Naive thymus-derived CD4-positive, alpha-beta T cell (primary cell): ENCODE measurements at regions of chr3 and their contacts with region 1.

Region 1: GRCh38 chr3:183468424-183468823 is 40.0 kb upstream of the MCF2L2 start:
- DNase-seq: no peak
- ATAC-seq: no peak
- H3K4me3 ChIP-seq: no peak overlapping the region
- H3K4me3 Mint-ChIP-seq: no peak overlapping the region
- H3K27ac ChIP-seq: no peak overlapping the region
- H3K27ac Mint-ChIP-seq: peak overlapping the region in 1 of 9 donors; percentile 27
- H3K4me1 ChIP-seq: peaks cover 0 to 5% of the 10 kb centered on the region in 2 donors
- H3K4me1 Mint-ChIP-seq: peaks cover 2 to 18% (median 5%) of the 10 kb centered on the region in 7 donors
- H3K27me3 ChIP-seq: no peaks in the 10 kb centered on the region
- H3K27me3 Mint-ChIP-seq: peaks cover 0 to 4% (median 0%) of the 10 kb centered on the region in 5 donors

Region 2: GRCh38 chr3:183122257-183122932 is 346.0 kb before region 1 on chr3:
- CTCF ChIA-PET with region 1: no interaction called
- POLR2A ChIA-PET with region 1: no interaction called
- intact Hi-C with region 1: loop called in 1 of 2 experiments (anchors 5 kb)
- DNase-seq: peak in 7 of 9 donors; percentile 15 to 60 (median 49)
- ATAC-seq: peak; percentile 75
- H3K4me3 ChIP-seq: no peak overlapping the region
- H3K4me3 Mint-ChIP-seq: no peak overlapping the region
- H3K27ac ChIP-seq: no peak overlapping the region
- H3K27ac Mint-ChIP-seq: no peak overlapping the region
- H3K4me1 ChIP-seq: no peaks in the 10 kb centered on the region
- H3K4me1 Mint-ChIP-seq: peaks cover 0 to 6% (median 0%) of the 10 kb centered on the region in 7 donors
- H3K27me3 ChIP-seq: no peaks in the 10 kb centered on the region
- H3K27me3 Mint-ChIP-seq: peaks cover 2 to 5% (median 4%) of the 10 kb centered on the region in 5 donors

Region 3: DNA sequence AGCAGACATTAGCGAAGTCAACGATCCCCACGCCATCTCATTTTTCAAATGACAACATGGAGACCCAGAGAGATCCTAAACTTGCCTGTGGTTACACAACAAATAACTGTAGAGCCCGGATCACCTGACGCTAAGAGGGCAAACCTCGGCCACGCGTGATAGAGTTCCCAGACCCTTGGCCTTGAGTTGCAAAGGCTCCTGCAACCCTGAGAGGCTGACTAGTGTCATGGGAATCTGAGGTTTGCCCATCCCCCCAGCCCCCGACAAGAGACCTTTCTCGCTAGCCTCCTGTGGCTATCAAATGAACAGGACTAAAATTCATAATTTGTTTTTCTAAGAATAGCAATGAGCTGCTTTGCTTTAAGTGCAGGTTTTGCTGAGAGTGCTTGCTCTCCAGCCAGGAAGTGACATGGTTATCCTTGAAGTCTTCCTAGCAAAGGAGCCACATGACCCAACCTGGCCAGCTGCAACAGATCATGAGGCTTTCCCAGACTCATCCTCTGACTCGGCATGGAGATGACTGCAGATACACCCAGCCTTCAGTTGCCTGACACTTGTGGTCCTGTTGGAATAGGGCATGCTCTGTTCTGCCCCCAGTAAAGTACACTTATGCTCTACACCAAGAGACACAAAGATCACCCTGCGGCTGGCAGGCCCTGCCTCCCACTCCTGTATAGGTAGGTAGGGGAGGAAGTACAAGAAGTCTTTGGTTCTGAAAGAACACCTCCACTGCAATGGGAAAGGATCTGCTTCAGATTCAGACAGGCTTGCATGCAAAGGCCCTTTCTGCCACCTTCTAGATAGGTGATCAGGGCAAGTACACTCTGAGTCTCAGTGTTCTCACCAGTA is 76.0 kb before region 1 on chr3:
- CTCF ChIA-PET with region 1: no interaction called
- POLR2A ChIA-PET with region 1: no interaction called
- intact Hi-C with region 1: no loop called
- DNase-seq: no peak
- ATAC-seq: no peak
- H3K4me3 ChIP-seq: no peak overlapping the region
- H3K4me3 Mint-ChIP-seq: no peak overlapping the region
- H3K27ac ChIP-seq: no peak overlapping the region
- H3K27ac Mint-ChIP-seq: no peak overlapping the region
- H3K4me1 ChIP-seq: no peaks in the 10 kb centered on the region
- H3K4me1 Mint-ChIP-seq: peaks cover 0 to 2% (median 0%) of the 10 kb centered on the region in 7 donors
- H3K27me3 ChIP-seq: no peaks in the 10 kb centered on the region
- H3K27me3 Mint-ChIP-seq: peaks cover 0 to 8% (median 0%) of the 10 kb centered on the region in 5 donors

Region 4: GRCh38 chr3:183427876-183428446 is 40.5 kb before region 1 on chr3:
- CTCF ChIA-PET with region 1: no interaction called
- POLR2A ChIA-PET with region 1: no interaction called
- intact Hi-C with region 1: loop called (anchors 1 to 2 kb)
- DNase-seq: peak in 5 of 9 donors; percentile 3 to 55 (median 4)
- ATAC-seq: peak; percentile 34
- H3K4me3 ChIP-seq: peak overlapping the region; percentile 77
- H3K4me3 Mint-ChIP-seq: peak overlapping the region; percentile 66 to 90 (median 80)
- H3K27ac ChIP-seq: no peak overlapping the region
- H3K27ac Mint-ChIP-seq: peak overlapping the region in 2 of 9 donors; percentile 20 to 61
- H3K4me1 ChIP-seq: peaks cover 0 to 8% of the 10 kb centered on the region in 2 donors
- H3K4me1 Mint-ChIP-seq: peaks cover 0 to 28% (median 5%) of the 10 kb centered on the region in 7 donors
- H3K27me3 ChIP-seq: no peaks in the 10 kb centered on the region
- H3K27me3 Mint-ChIP-seq: peaks cover 0 to 29% (median 2%) of the 10 kb centered on the region in 5 donors

Region 5: DNA sequence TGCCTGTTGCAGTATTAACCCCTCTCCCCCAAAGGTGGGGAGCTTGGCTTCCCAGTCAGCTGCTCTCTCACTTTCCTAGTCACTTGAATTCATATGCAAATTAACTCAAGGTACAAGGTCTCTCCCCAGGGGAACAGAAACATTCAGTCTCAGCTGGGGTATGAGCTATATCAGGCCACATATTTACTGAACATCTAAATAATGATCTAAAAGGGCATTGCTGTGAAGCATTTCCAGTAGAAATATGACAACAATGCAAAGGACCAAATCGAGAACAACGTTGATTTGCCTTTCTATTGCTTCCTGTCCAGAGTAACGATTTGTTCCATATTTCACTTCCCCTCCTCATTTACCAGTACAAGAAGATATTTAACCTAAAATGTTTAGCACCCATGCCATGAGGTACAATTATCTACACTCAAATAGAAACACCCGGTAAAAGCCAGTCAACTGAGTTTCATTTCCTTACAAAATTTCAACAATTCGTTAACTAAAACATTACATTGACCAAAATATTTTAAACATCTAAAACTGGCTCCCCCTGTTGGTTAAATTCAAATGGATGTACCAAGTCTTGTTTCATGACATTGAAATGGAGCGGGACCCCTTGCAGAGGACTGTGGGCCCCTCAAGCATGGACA is 123.6 kb after region 1 on chr3:
- CTCF ChIA-PET with region 1: interaction called, 11 read pairs
- POLR2A ChIA-PET with region 1: no interaction called
- intact Hi-C with region 1: loop called (anchors 1 kb)
- DNase-seq: peak in 6 of 9 donors; percentile 11 to 48 (median 40)
- ATAC-seq: peak; percentile 44
- H3K4me3 ChIP-seq: no peak overlapping the region
- H3K4me3 Mint-ChIP-seq: peak overlapping the region in 9 of 10 donors; percentile 37 to 86 (median 70)
- H3K27ac ChIP-seq: no peak overlapping the region
- H3K27ac Mint-ChIP-seq: peak overlapping the region in 8 of 9 donors; percentile 39 to 93 (median 62)
- H3K4me1 ChIP-seq: peaks cover 6 to 39% of the 10 kb centered on the region in 2 donors
- H3K4me1 Mint-ChIP-seq: peaks cover 24 to 53% (median 44%) of the 10 kb centered on the region in 7 donors
- H3K27me3 ChIP-seq: no peaks in the 10 kb centered on the region
- H3K27me3 Mint-ChIP-seq: peaks cover 0 to 2% (median 0%) of the 10 kb centered on the region in 5 donors

Region 6: GRCh38 chr3:183766745-183767606 is 298.6 kb after region 1 on chr3:
- CTCF ChIA-PET with region 1: interaction called, 29 read pairs
- POLR2A ChIA-PET with region 1: interaction called, 4 read pairs
- intact Hi-C with region 1: loop called (anchors 1 kb)
- DNase-seq: peak; percentile 41 to 72 (median 65)
- ATAC-seq: peak; percentile 96
- H3K4me3 ChIP-seq: no peak overlapping the region
- H3K4me3 Mint-ChIP-seq: no peak overlapping the region
- H3K27ac ChIP-seq: no peak overlapping the region
- H3K27ac Mint-ChIP-seq: peak overlapping the region in 4 of 9 donors; percentile 3 to 73 (median 40)
- H3K4me1 ChIP-seq: no peaks in the 10 kb centered on the region
- H3K4me1 Mint-ChIP-seq: peaks cover 5 to 18% (median 12%) of the 10 kb centered on the region in 7 donors
- H3K27me3 ChIP-seq: no peaks in the 10 kb centered on the region
- H3K27me3 Mint-ChIP-seq: no peaks in the 10 kb centered on the region